Activated CD4-positive, alpha-beta T cell treated with anti-CD3 and anti-CD28 coated beads, Interleukin-2, amount 10 ng/mL, durations not matched to agents 24 days and 14 days (primary cell): ENCODE measurements at regions of chr5 and their contacts with region 1.

Region 1: GRCh38 chr5:132526290-132526973 is 16.9 kb downstream of the IL5 start:
- DNase-seq: peak; percentile 90
- H3K4me3 Mint-ChIP-seq: no peak overlapping the region
- H3K27ac Mint-ChIP-seq: peak overlapping the region; percentile 42
- H3K4me1 Mint-ChIP-seq: peaks cover 46% of the 10 kb centered on the region
- H3K27me3 Mint-ChIP-seq: peaks cover under 1% of the 10 kb centered on the region

Region 2: DNA sequence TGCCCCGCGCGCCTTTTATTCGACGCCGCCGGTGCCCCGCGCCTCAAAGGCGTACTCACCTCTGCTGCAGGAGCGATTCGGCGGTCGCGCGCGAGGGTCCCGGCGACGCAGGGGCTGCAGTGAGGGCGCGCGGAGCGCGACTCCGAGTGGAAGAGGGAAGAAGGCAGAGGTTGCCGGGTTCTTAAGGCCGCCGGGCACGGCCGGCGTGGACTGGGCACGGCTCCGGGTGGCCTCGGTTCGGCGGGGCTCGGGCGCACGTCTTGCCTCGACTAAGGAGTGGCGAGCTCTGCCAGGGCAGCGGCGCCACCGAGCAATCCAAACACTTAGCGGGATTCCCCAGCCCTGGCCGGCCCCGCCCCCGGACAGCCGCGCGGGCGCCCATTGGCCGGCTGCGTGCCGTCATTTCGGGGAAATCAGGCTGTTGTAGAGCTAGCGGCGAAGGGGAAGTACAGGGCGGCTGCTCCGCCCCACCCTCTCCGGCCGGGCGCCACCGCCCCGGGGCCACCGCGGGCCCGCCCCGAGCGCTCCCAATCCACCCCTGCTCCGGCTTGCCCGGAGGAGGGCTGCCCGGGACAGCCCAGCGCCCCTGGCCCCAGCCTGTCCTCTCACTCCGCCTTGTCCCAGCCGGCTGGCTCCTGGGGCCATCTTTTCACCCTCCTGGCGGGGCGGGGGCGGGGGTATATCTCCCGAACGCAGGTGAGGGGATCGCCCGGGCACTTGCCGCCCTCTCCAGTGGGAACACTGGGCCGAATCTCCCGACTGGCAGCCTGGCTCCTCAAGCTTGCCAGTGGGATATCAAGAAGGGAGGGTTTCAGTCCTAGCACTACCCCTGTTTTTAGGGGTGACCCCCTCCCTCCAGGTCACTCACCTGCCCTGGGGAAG is 35.7 kb before region 1 on chr5 and contains the start of gene IRF1:
- intact Hi-C with region 1: loop called (anchors 1 kb)
- DNase-seq: peak; percentile 100
- H3K4me3 Mint-ChIP-seq: peak within 1 kb of the TSS; percentile 99
- H3K27ac Mint-ChIP-seq: peak within 1 kb of the TSS; percentile 94
- H3K4me1 Mint-ChIP-seq: peaks cover 70% of the 10 kb centered on the region
- H3K27me3 Mint-ChIP-seq: no peaks in the 10 kb centered on the region
- total RNA-seq, gene IRF1: 167 and 181 TPM in 2 replicates

Region 3: GRCh38 chr5:132556763-132557477 is 30.5 kb after region 1 on chr5 and contains the start of gene RAD50:
- intact Hi-C with region 1: loop called (anchors 1 kb)
- DNase-seq: peak; percentile 98
- H3K4me3 Mint-ChIP-seq: peak within 1 kb of the TSS; percentile 89
- H3K27ac Mint-ChIP-seq: peak within 1 kb of the TSS; percentile 94
- H3K4me1 Mint-ChIP-seq: peaks cover 25% of the 10 kb centered on the region
- H3K27me3 Mint-ChIP-seq: no peaks in the 10 kb centered on the region
- total RNA-seq, gene RAD50: 37.4 and 39.5 TPM in 2 replicates

Region 4: GRCh38 chr5:132629230-132629944 is 103.0 kb after region 1 on chr5:
- intact Hi-C with region 1: no loop called
- DNase-seq: peak; percentile 65
- H3K4me3 Mint-ChIP-seq: peak overlapping the region; percentile 28
- H3K27ac Mint-ChIP-seq: peak overlapping the region; percentile 86
- H3K4me1 Mint-ChIP-seq: peaks cover 36% of the 10 kb centered on the region
- H3K27me3 Mint-ChIP-seq: no peaks in the 10 kb centered on the region

Region 5: DNA sequence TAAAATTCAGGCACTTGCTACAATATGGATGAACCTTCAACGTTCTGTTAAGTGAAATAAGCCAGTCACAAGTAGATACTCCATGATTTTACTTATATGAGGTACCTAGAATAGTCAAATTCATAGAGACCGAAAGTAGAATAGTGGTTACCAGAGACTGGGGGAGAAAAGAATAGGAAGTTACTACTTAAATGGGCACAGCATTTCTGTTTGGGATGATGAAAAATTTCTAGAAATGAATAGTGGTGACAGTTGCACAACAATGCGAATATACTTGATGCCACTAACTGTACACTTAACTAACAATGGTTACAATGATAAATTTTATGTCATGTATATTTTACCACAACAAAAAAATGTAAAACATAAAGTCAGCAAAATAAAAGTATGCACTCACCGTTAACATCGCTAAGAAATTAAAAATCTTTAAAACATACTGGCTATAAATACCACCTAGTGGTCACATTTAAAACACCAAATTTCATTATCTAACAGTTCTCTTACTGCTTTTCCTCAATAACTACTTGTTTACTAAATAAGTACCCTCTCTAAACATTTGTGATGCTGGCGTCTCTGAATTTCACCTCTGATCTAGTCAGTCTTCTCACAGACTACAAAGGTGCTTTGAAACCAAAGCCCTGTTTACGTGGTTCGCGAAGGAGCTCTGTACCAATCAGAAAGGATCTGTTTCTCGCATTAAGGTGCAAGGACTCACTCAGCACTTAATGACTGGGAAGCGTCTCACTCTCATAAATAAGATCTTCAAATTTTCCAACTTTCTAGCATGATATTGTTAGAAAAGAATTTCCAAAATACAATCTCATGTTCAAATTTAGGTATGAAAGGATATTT is 188.2 kb after region 1 on chr5:
- intact Hi-C with region 1: loop called (anchors 5 kb)
- DNase-seq: no peak
- H3K4me3 Mint-ChIP-seq: peak overlapping the region; percentile 40
- H3K27ac Mint-ChIP-seq: peak overlapping the region; percentile 4
- H3K4me1 Mint-ChIP-seq: peaks cover 15% of the 10 kb centered on the region
- H3K27me3 Mint-ChIP-seq: no peaks in the 10 kb centered on the region

Region 6: DNA sequence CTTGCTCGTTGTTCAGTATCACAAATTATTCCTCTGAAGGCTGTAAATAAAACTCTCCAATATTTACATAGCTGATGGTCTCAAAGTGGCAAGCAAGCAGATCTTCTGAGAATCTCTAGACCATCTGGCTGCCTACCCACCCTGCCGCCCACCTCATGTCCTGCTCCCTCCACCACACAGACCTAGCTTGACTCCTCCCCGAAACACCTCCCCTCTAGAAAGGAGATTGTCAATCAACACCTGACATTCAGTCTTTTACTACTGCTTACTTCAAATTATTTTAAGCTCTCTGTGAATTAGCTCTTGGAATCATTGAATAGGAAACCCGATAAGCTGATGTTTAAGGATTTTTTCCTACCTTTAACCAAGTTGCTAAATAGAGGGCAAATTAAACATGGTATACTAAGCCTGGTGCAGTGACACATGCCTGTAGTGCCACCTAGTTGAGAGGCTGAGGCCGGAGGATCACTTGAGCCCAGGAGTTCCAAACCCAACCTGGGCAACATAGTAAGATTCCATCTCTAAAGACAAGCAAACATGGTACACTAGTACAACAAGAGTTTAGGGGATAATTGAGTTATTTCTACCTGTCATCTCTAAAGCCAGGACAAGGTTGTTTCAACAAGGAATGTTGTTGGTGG is 275.7 kb after region 1 on chr5:
- intact Hi-C with region 1: loop called (anchors 5 kb)
- DNase-seq: no peak
- H3K4me3 Mint-ChIP-seq: no peak overlapping the region
- H3K27ac Mint-ChIP-seq: no peak overlapping the region
- H3K4me1 Mint-ChIP-seq: peaks cover 3% of the 10 kb centered on the region
- H3K27me3 Mint-ChIP-seq: peaks cover 60% of the 10 kb centered on the region